Esophagus squamous epithelium (tissue), 5 donors: ENCODE measurements at regions of chr6 and their contacts with region 1.

Region 1: DNA sequence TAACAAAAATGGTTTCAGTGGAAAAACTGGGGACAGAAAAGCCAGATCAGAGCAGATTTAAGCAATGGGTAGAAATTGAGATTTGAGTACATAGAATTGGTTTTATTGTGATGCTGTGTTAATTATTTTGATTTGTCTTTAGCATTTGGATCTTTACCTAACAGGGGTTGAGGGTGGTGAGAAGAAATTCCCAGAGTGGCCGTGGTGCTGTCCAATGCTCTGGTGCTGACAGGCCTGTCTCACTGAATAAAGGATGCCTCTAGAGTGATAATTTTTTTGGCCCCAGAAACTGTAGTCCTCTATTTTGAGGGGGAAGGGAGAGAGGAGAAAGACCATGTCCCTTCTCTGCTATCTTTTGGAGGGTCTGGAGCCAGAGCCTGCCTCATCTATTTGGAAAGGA is 79.1 kb downstream of the LYRM2 start:
- DNase-seq: no peak
- H3K4me3 ChIP-seq: no peak overlapping the region
- H3K27ac ChIP-seq: no peak overlapping the region
- H3K4me1 ChIP-seq: peaks cover 0 to 6% (median 2%) of the 10 kb centered on the region in 3 donors
- H3K27me3 ChIP-seq: peaks cover 0 to 31% (median 0%) of the 10 kb centered on the region in 4 donors
- CTCF ChIP-seq: no peak
- POLR2A ChIP-seq: no peak

Region 2: GRCh38 chr6:90993770-90994169 is 1434.3 kb after region 1 on chr6:
- intact Hi-C with region 1: loop called (anchors 10 kb)
- DNase-seq: no peak
- H3K4me3 ChIP-seq: no peak overlapping the region
- H3K27ac ChIP-seq: no peak overlapping the region
- H3K4me1 ChIP-seq: peaks cover 0 to 8% (median 0%) of the 10 kb centered on the region in 3 donors
- H3K27me3 ChIP-seq: no peaks in the 10 kb centered on the region
- CTCF ChIP-seq: no peak
- POLR2A ChIP-seq: no peak